Activated B cell treated with CpG ODN at 0.5 μM for 24 hours (primary cell): ENCODE measurements at regions of chr10 and their contacts with region 1.

Region 1: GRCh38 chr10:12214763-12215218 is 18.8 kb downstream of the CDC123 start:
- DNase-seq: no peak
- ATAC-seq: peak; percentile 42
- H3K4me3 Mint-ChIP-seq: peak overlapping the region; percentile 78
- H3K27ac Mint-ChIP-seq: peak overlapping the region; percentile 88
- H3K4me1 Mint-ChIP-seq: peaks cover 19% of the 10 kb centered on the region
- H3K27me3 Mint-ChIP-seq: no peaks in the 10 kb centered on the region
- CTCF ChIP-seq: peak; percentile 66

Region 2: DNA sequence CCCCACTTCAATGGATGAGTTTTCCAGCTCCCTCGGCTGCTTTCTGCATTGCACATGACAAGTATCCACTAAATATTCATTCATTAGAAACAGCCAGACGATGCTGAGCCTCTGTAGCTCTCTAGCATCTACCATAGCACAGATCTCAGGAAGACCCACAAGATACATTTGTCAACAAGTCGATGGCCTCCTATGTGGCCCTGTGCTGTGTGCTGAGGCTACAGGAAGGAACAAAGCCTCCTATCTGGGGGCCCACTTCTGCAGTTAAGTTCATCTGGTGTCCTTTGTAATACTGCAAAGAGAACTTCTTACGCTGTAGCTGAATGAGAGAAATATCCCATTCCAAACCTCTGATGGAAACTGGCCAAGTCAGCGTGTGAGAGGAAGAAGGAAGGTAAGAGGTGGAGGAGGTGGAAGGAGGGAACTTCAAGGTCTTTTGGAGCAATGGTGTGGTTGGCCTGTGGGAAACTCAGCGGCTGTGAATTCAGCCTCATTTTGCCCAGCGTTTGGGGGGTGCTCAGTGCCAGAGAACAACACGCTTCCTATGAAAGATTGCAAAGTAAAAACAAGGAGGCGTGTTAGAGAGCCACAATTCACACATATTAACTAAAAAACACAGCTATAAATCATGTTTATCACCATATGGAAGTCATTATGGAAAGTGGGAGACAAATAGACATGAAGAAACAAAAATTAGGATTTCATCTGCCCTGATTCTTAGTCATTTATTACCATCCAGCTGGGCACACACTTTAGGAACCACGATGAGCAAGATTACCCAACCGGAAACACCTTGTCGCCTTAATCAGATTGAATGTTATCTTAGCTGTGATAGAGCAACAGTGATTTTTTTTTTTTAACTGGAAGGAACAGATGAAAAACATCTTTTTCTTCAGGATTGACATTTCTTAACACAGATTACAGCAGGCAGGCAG is 541.2 kb before region 1 on chr10:
- CTCF ChIA-PET with region 1: no interaction called
- POLR2A ChIA-PET with region 1: no interaction called
- intact Hi-C with region 1: no loop called
- DNase-seq: no peak
- ATAC-seq: no peak
- H3K4me3 Mint-ChIP-seq: peak overlapping the region; percentile 73
- H3K27ac Mint-ChIP-seq: peak overlapping the region; percentile 85
- H3K4me1 Mint-ChIP-seq: peaks cover 89% of the 10 kb centered on the region
- H3K27me3 Mint-ChIP-seq: no peaks in the 10 kb centered on the region
- CTCF ChIP-seq: no peak

Region 3: DNA sequence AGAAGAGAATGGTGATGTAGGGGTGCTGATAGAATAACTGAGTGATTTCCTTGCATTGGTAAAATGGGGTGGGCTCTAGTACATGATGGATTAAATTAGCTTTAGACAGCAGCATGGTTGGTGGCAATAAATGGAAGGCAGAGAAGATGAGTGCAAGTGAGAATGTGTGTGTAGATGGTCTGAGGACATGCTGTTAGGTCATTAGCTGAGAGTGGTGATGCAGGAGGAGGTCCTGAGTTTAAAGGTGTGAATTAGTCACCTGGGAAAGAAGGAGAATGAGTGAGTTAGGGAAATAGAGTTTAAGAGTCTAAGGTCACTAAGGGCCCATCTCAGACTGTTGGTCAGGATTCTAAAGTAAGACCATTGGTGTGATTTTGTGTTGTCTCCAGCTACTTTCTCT is 103.3 kb before region 1 on chr10:
- CTCF ChIA-PET with region 1: no interaction called
- POLR2A ChIA-PET with region 1: no interaction called
- intact Hi-C with region 1: no loop called
- DNase-seq: no peak
- ATAC-seq: no peak
- H3K4me3 Mint-ChIP-seq: no peak overlapping the region
- H3K27ac Mint-ChIP-seq: peak overlapping the region; percentile 48
- H3K4me1 Mint-ChIP-seq: peaks cover 20% of the 10 kb centered on the region
- H3K27me3 Mint-ChIP-seq: no peaks in the 10 kb centered on the region
- CTCF ChIP-seq: no peak

Region 4: DNA sequence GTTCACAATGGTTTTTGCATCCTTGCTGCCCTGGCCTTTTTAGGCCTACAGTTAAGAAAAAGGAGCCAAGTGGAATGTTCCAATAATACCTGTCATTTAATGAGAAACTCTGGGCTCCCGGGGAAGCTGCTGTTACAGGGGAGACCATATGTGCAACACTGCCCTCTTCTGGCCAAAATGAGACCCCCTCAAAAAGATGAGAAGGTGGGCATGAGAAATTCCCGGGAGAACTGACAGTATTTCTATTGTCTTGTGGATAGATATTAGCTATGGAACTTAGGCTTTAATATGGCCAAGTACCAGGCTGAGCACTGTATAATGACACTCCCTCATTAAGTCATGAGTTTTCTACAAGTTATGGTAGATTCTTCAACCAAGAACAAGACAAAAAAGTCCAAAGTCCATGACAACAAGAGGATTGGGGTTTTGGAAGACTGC is 687.4 kb after region 1 on chr10:
- CTCF ChIA-PET with region 1: interaction called, 11 read pairs
- POLR2A ChIA-PET with region 1: no interaction called
- intact Hi-C with region 1: no loop called
- DNase-seq: peak; percentile 18
- ATAC-seq: no peak
- H3K4me3 Mint-ChIP-seq: no peak overlapping the region
- H3K27ac Mint-ChIP-seq: no peak overlapping the region
- H3K4me1 Mint-ChIP-seq: no peaks in the 10 kb centered on the region
- H3K27me3 Mint-ChIP-seq: peaks cover 23% of the 10 kb centered on the region
- CTCF ChIP-seq: peak; percentile 82